AG04450 (cell line): ENCODE measurements at regions of chr5 and their contacts with region 1.

Region 1: GRCh38 chr5:181207214-181208107 is 2.5 kb upstream of the TRIM7 start:
- DNase-seq: peak; percentile 78
- H3K4me3 ChIP-seq: peak overlapping the region; percentile 68
- H3K27ac ChIP-seq: peak overlapping the region; percentile 73
- H3K27me3 ChIP-seq: no peaks in the 10 kb centered on the region
- CTCF ChIP-seq: no peak

Region 2: DNA sequence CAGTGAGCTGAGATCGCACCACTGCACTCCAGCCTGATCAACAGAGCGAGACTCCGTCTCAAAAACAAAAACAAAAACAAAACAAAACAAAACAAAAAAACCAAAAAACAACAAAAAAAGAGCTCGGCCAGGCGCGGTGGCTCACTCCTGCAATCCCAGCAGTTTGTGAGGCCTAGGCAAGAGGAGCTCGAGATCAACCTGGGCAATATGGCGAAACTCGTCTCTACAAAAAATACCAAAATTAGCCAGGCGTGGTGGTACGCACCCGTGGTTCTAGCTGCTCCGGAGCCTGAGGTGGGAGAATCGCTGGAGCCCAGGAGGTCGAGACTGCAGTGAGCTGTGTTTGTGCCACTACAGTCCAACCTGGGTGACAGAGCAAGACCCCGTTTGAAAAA is 22.6 kb before region 1 on chr5:
- CTCF ChIA-PET with region 1: interaction called, 15 read pairs
- POLR2A ChIA-PET with region 1: interaction called, 72 read pairs
- DNase-seq: no peak
- H3K4me3 ChIP-seq: no peak overlapping the region
- H3K27ac ChIP-seq: no peak overlapping the region
- H3K27me3 ChIP-seq: no peaks in the 10 kb centered on the region
- CTCF ChIP-seq: no peak

Region 3: GRCh38 chr5:181191529-181192394 is 15.7 kb before region 1 on chr5:
- CTCF ChIA-PET with region 1: interaction called, 8 read pairs
- POLR2A ChIA-PET with region 1: interaction called, 72 read pairs
- DNase-seq: peak; percentile 89
- H3K4me3 ChIP-seq: peak overlapping the region; percentile 90
- H3K27ac ChIP-seq: peak overlapping the region; percentile 52
- H3K27me3 ChIP-seq: no peaks in the 10 kb centered on the region
- CTCF ChIP-seq: no peak